CD8-positive, alpha-beta memory T cell (primary cell): ENCODE measurements at regions of chr20 and their contacts with region 1.

Region 1: DNA sequence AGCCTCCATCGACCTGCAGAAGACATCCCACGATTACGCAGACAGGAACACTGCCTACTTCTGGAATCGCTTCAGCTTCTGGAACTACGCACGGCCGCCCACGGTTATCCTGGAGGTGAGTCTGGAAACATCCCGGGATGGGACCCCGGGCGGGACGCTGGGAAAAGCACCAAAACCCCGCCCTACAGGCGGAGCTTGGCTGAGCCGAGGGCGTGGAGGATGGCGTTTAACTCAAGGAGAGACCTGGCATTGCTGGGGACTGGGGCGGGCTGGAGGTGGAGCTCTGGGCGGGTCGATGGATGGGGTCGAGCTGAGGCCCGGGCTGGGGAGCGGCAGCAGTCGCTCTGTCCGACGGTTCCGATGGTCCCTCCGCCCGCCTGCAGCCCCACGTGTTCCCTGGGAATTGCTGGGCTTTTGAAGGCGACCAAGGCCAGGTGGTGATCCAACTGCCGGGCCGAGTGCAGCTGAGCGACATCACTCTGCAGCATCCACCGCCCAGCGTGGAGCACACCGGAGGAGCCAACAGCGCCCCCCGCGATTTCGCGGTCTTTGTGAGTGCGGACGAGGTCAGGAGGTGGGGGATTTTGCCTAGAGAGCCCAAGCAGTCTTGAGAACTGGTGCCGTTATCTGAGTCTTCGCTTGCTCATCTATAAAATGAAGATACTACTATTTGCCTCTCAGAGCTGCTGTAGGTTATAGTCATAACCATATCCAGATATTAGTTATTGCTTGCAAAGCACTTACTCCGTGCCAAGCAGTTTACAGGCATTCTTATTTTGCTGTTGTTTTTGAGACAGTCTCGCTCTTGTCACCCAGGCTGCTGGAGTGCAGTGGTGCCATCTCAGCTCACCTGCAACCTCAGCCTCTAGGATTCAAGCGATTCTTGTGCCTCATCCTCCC is 3.8 kb downstream of the SPAG4 start:
- DNase-seq: peak; percentile 64 to 78 (median 74)
- H3K4me3 ChIP-seq: peak overlapping the region; percentile 66
- H3K4me3 Mint-ChIP-seq: peak overlapping the region; percentile 83 to 95 (median 92)
- H3K27ac ChIP-seq: no peak overlapping the region
- H3K27ac Mint-ChIP-seq: peak overlapping the region; percentile 78 to 98 (median 83)
- H3K4me1 ChIP-seq: peaks cover 26% of the 10 kb centered on the region
- H3K4me1 Mint-ChIP-seq: peaks cover 25 to 49% (median 32%) of the 10 kb centered on the region in 3 donors
- H3K27me3 ChIP-seq: no peaks in the 10 kb centered on the region
- H3K27me3 Mint-ChIP-seq: peaks cover 0 to 8% of the 10 kb centered on the region in 2 donors

Region 2: GRCh38 chr20:35601008-35601973 is 18.2 kb before region 1 on chr20:
- CTCF ChIA-PET with region 1: interaction called, 55 read pairs
- POLR2A ChIA-PET with region 1: interaction called, 5 read pairs
- DNase-seq: peak; percentile 64 to 86 (median 71)
- H3K4me3 ChIP-seq: peak overlapping the region; percentile 74
- H3K4me3 Mint-ChIP-seq: peak overlapping the region; percentile 64 to 90 (median 81)
- H3K27ac ChIP-seq: no peak overlapping the region
- H3K27ac Mint-ChIP-seq: peak overlapping the region in 6 of 8 donors; percentile 7 to 88 (median 38)
- H3K4me1 ChIP-seq: peaks cover 9% of the 10 kb centered on the region
- H3K4me1 Mint-ChIP-seq: peaks cover 5 to 15% (median 10%) of the 10 kb centered on the region in 3 donors
- H3K27me3 ChIP-seq: peaks cover 12% of the 10 kb centered on the region
- H3K27me3 Mint-ChIP-seq: peaks cover 16 to 23% of the 10 kb centered on the region in 2 donors

Region 3: GRCh38 chr20:35629427-35630145 is 10.1 kb after region 1 on chr20:
- CTCF ChIA-PET with region 1: interaction called, 26 read pairs
- POLR2A ChIA-PET with region 1: no interaction called
- DNase-seq: no peak
- H3K4me3 ChIP-seq: no peak overlapping the region
- H3K4me3 Mint-ChIP-seq: no peak overlapping the region
- H3K27ac ChIP-seq: no peak overlapping the region
- H3K27ac Mint-ChIP-seq: peak overlapping the region in 3 of 8 donors; percentile 17 to 81 (median 45)
- H3K4me1 ChIP-seq: no peaks in the 10 kb centered on the region
- H3K4me1 Mint-ChIP-seq: peaks cover 4 to 8% (median 5%) of the 10 kb centered on the region in 3 donors
- H3K27me3 ChIP-seq: no peaks in the 10 kb centered on the region
- H3K27me3 Mint-ChIP-seq: no peaks in the 10 kb centered on the region

Region 4: GRCh38 chr20:35664544-35665221 is 45.2 kb after region 1 on chr20 and contains the starts of genes CPNE1 and RBM12:
- CTCF ChIA-PET with region 1: interaction called, 8 read pairs
- POLR2A ChIA-PET with region 1: interaction called, 57 read pairs
- DNase-seq: peak; percentile 88 to 96 (median 93)
- H3K4me3 ChIP-seq: peak within 1 kb of the TSS; percentile 95
- H3K4me3 Mint-ChIP-seq: peak within 1 kb of the TSS; percentile 86 to 98 (median 96)
- H3K27ac ChIP-seq: peak within 1 kb of the TSS; percentile 98
- H3K27ac Mint-ChIP-seq: peak within 1 kb of the TSS; percentile 94 to 100 (median 99)
- H3K4me1 ChIP-seq: peaks cover 41% of the 10 kb centered on the region
- H3K4me1 Mint-ChIP-seq: peaks cover 47 to 49% (median 49%) of the 10 kb centered on the region in 3 donors
- H3K27me3 ChIP-seq: no peaks in the 10 kb centered on the region
- H3K27me3 Mint-ChIP-seq: no peaks in the 10 kb centered on the region
- total RNA-seq, gene CPNE1: 295 to 305 TPM
- total RNA-seq, gene RBM12: 103 to 110 TPM

Region 5: GRCh38 chr20:35762481-35763245 is 143.2 kb after region 1 on chr20:
- CTCF ChIA-PET with region 1: no interaction called
- POLR2A ChIA-PET with region 1: no interaction called
- DNase-seq: no peak
- H3K4me3 ChIP-seq: no peak overlapping the region
- H3K4me3 Mint-ChIP-seq: no peak overlapping the region
- H3K27ac ChIP-seq: no peak overlapping the region
- H3K27ac Mint-ChIP-seq: peak overlapping the region in 5 of 8 donors; percentile 16 to 85 (median 74)
- H3K4me1 ChIP-seq: peaks cover 30% of the 10 kb centered on the region
- H3K4me1 Mint-ChIP-seq: peaks cover 14 to 25% (median 17%) of the 10 kb centered on the region in 3 donors
- H3K27me3 ChIP-seq: no peaks in the 10 kb centered on the region
- H3K27me3 Mint-ChIP-seq: no peaks in the 10 kb centered on the region

Region 6: DNA sequence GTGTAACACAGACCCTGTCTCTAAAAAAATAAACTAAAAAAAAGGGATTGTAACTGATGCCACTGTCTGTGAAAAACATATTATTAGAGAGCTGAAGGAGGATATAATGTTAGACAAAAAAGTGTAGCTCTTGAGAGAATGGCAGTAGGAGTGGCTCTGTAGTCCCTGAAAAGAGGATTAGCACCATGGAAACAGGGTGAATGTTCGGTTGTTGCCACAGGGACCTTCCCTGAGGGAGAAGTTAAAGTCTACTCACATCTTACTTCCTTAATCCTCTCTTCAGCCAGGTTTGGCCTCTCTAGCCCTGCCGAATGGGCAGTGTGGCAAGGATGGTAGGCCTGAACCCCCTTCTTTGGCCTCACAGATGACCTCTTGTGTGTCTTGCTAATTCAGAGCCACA is 322.8 kb after region 1 on chr20:
- CTCF ChIA-PET with region 1: no interaction called
- POLR2A ChIA-PET with region 1: no interaction called
- DNase-seq: no peak
- H3K4me3 ChIP-seq: no peak overlapping the region
- H3K4me3 Mint-ChIP-seq: no peak overlapping the region
- H3K27ac ChIP-seq: no peak overlapping the region
- H3K27ac Mint-ChIP-seq: peak overlapping the region in 1 of 8 donors; percentile 26
- H3K4me1 ChIP-seq: no peaks in the 10 kb centered on the region
- H3K4me1 Mint-ChIP-seq: peaks cover 0 to under 1% (median 0%) of the 10 kb centered on the region in 3 donors
- H3K27me3 ChIP-seq: no peaks in the 10 kb centered on the region
- H3K27me3 Mint-ChIP-seq: no peaks in the 10 kb centered on the region